ENCODE measurements at regions of chr20 and their contacts with region 1.

Region 1: GRCh38 chr20:19552134-19552835 is 205.8 kb upstream of the RIN2 start:
- DNase-seq: no peak

Region 2: GRCh38 chr20:19223652-19224051 is 328.6 kb before region 1 on chr20:
- intact Hi-C with region 1: loop called (anchors 5 kb)
- DNase-seq: no peak